ENCODE measurements at regions of chr1 and their contacts with region 1.

Region 1: GRCh38 chr1:64966158-64966971 is at the start of gene JAK1:
- DNase-seq: peak; percentile 79 to 94 (median 91)
- ATAC-seq: peak; percentile 91
- H3K4me3 ChIP-seq: peak within 1 kb of the TSS; percentile 93
- H3K4me3 Mint-ChIP-seq: peak within 1 kb of the TSS; percentile 90 to 97 (median 94)
- H3K27ac ChIP-seq: peak within 1 kb of the TSS; percentile 97
- H3K27ac Mint-ChIP-seq: peak within 1 kb of the TSS; percentile 91 to 99 (median 97)
- H3K4me1 ChIP-seq: peaks cover 31 to 41% of the 10 kb centered on the region in 2 donors
- H3K4me1 Mint-ChIP-seq: peaks cover 37 to 55% (median 49%) of the 10 kb centered on the region in 7 donors
- H3K27me3 ChIP-seq: no peaks in the 10 kb centered on the region
- H3K27me3 Mint-ChIP-seq: peaks cover 0 to 3% (median 0%) of the 10 kb centered on the region in 5 donors
- total RNA-seq, gene JAK1: 210 to 365 (median 265) TPM

Region 2: DNA sequence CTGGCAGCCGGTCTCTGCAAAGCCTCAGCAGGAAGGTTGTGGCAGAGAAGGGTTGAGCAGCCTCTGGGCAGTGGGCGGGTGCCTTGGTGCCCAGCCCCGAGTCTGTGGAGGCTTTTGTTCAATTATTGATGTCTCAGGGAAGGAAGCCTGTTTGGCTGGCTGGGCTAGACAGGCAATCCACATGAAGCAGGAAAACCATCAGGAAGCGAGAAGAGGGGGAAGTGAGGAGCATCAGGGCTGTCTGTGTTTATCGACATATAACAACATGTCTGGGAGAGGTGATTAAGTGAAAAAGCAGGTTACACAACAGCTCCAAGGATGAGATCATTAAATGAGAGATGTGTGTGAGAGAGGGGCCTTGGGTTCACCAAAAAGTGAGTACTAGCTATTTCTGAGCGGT is 657.5 kb before region 1 on chr1:
- CTCF ChIA-PET with region 1: no interaction called
- POLR2A ChIA-PET with region 1: no interaction called
- intact Hi-C with region 1: no loop called
- DNase-seq: no peak
- ATAC-seq: no peak
- H3K4me3 ChIP-seq: no peak overlapping the region
- H3K4me3 Mint-ChIP-seq: no peak overlapping the region
- H3K27ac ChIP-seq: no peak overlapping the region
- H3K27ac Mint-ChIP-seq: peak overlapping the region in 1 of 9 donors; percentile 82
- H3K4me1 ChIP-seq: no peaks in the 10 kb centered on the region
- H3K4me1 Mint-ChIP-seq: no peaks in the 10 kb centered on the region
- H3K27me3 ChIP-seq: no peaks in the 10 kb centered on the region
- H3K27me3 Mint-ChIP-seq: peaks cover 0 to 7% (median 3%) of the 10 kb centered on the region in 5 donors

Region 3: DNA sequence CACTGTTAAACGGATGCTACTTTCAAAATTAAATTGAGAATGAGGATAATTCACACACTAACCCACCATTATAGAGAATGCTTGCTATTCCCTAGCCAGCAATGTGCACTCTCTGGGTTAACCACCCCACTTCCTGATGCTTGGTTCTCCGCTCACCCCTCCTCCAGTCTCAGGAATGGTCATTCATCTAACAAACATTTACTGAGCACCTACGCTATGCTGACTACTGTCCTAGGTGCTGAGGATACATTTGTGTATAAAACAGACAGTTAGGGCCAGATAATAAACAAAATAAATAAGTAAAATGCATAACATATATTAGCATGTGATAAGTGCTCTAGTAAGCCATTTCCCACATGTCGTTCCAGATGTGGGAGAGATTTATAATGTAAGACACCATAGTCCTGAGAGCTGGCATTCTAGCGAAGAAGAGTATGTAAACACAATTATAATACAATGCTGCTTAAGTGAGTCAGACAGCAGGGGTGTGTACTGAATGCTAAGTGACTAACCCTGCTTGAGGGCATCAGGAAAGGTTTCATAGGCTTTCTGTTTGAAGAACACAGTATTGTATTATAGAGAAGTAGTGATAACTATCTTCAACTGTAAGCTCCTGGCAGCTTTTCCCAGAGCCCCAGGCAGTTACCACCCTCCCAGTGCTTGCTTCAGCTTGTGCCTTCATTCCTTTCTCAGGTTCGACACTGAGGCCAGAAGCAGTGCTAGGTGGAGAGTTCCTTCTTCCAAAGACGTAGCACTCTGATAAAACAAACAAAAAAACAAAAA is 623.1 kb before region 1 on chr1:
- CTCF ChIA-PET with region 1: no interaction called
- POLR2A ChIA-PET with region 1: no interaction called
- intact Hi-C with region 1: no loop called
- DNase-seq: no peak
- ATAC-seq: no peak
- H3K4me3 ChIP-seq: no peak overlapping the region
- H3K4me3 Mint-ChIP-seq: no peak overlapping the region
- H3K27ac ChIP-seq: no peak overlapping the region
- H3K27ac Mint-ChIP-seq: no peak overlapping the region
- H3K4me1 ChIP-seq: no peaks in the 10 kb centered on the region
- H3K4me1 Mint-ChIP-seq: no peaks in the 10 kb centered on the region
- H3K27me3 ChIP-seq: no peaks in the 10 kb centered on the region
- H3K27me3 Mint-ChIP-seq: peaks cover 0 to 8% (median 4%) of the 10 kb centered on the region in 5 donors

Region 4: DNA sequence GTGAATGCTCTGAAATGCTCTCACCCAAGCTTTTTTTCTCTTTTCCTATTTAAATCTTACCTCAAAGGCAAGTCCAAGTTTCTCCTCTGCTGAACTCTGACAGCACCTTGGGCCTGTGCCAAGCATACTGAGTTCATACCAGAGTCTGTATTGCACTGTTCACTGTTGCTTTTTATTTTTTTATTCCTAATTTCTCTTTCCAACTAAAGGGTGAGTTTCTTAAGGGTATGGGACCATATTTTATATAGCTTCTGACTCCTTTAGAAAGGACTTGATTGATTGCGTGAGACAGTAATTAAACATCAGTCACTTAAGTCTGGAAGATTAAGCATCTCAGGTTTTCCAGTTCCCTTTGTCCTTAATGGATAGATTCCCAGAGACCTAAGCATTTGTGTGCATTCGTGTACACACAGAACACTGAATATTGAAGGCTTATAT is 426.6 kb before region 1 on chr1:
- CTCF ChIA-PET with region 1: no interaction called
- POLR2A ChIA-PET with region 1: no interaction called
- intact Hi-C with region 1: loop called in 1 of 2 experiments (anchors 10 kb)
- DNase-seq: no peak
- ATAC-seq: no peak
- H3K4me3 ChIP-seq: no peak overlapping the region
- H3K4me3 Mint-ChIP-seq: peak overlapping the region in 8 of 10 donors; percentile 55 to 84 (median 70)
- H3K27ac ChIP-seq: peak overlapping the region; percentile 4
- H3K27ac Mint-ChIP-seq: peak overlapping the region in 8 of 9 donors; percentile 74 to 95 (median 92)
- H3K4me1 ChIP-seq: peaks cover 0 to 48% of the 10 kb centered on the region in 2 donors
- H3K4me1 Mint-ChIP-seq: peaks cover 30 to 98% (median 65%) of the 10 kb centered on the region in 7 donors
- H3K27me3 ChIP-seq: no peaks in the 10 kb centered on the region
- H3K27me3 Mint-ChIP-seq: peaks cover 0 to 5% (median 0%) of the 10 kb centered on the region in 5 donors

Region 5: DNA sequence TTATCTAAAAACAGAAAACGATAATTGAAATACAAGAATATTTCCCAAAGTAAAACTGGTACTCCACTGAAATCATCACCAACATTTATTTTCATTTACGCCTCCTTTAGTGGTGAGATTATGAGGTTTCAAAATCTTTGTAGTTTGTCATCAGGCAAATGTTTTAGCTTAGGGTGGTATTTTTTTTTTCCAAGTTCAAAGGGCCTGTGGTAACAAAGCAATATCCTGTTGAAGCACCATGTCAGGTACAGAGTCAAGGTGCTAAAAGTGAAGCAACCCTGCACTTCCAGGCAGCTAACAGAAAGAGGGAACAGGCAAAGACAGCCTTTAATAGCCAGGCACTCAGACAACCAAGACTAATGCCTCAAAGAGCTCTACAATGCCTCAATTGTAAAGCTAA is 89.2 kb before region 1 on chr1:
- CTCF ChIA-PET with region 1: interaction called, 5 read pairs
- POLR2A ChIA-PET with region 1: interaction called, 20 read pairs
- intact Hi-C with region 1: loop called (anchors 1 kb)
- DNase-seq: peak in 7 of 9 donors; percentile 75 to 90 (median 87)
- ATAC-seq: peak; percentile 96
- H3K4me3 ChIP-seq: peak overlapping the region; percentile 8
- H3K4me3 Mint-ChIP-seq: peak overlapping the region; percentile 70 to 83 (median 76)
- H3K27ac ChIP-seq: peak overlapping the region; percentile 36
- H3K27ac Mint-ChIP-seq: peak overlapping the region; percentile 41 to 95 (median 90)
- H3K4me1 ChIP-seq: peaks cover 43 to 53% of the 10 kb centered on the region in 2 donors
- H3K4me1 Mint-ChIP-seq: peaks cover 38 to 88% (median 84%) of the 10 kb centered on the region in 7 donors
- H3K27me3 ChIP-seq: no peaks in the 10 kb centered on the region
- H3K27me3 Mint-ChIP-seq: no peaks in the 10 kb centered on the region

Region 6: GRCh38 chr1:64928325-64928724 is 38.0 kb before region 1 on chr1:
- CTCF ChIA-PET with region 1: no interaction called
- POLR2A ChIA-PET with region 1: interaction called, 7 read pairs
- intact Hi-C with region 1: loop called (anchors 2 kb)
- DNase-seq: no peak
- ATAC-seq: no peak
- H3K4me3 ChIP-seq: no peak overlapping the region
- H3K4me3 Mint-ChIP-seq: peak overlapping the region in 9 of 10 donors; percentile 22 to 66 (median 57)
- H3K27ac ChIP-seq: no peak overlapping the region
- H3K27ac Mint-ChIP-seq: peak overlapping the region in 8 of 9 donors; percentile 17 to 73 (median 41)
- H3K4me1 ChIP-seq: peaks cover 53 to 57% of the 10 kb centered on the region in 2 donors
- H3K4me1 Mint-ChIP-seq: peaks cover 63 to 95% (median 89%) of the 10 kb centered on the region in 7 donors
- H3K27me3 ChIP-seq: no peaks in the 10 kb centered on the region
- H3K27me3 Mint-ChIP-seq: no peaks in the 10 kb centered on the region

Region 7: DNA sequence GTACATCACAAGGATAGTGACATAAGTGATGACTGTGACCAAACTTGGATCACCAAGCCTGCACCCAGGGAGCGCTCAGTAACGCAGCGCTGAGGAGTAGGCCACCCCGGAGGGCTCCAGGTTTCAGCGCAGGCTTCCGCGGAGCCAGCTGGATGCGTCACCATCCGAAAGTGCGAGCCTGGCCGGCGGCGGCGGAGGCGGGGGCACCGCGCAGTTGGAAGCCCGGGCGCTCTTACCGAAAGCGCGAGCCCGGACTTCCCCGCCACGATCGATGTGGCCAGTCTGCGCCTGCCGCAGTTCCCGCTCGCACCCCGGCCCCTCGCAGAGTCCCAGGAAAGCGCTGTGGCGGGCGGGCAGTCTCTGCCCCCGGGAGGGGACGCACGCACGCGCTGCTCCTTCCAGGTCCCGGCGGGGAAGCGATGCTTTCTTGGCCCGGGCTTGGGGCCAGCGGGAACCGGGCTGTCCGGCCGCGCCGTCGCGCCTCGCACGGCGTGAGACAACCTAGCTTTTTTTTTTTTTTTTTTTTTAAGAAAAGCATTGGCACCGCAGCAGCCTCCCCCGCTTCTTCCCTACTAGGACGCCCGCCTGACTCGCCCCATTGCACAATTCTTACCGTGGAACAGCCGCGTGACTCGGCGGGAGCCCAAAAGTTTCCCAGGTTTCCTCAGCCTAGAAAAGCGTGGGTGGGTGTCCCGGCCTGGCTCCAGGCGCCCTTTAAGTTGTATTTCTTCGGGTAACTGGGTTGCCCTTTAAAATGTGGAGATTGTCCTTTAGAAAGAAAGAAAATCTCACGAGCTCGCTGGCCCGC is 36.3 kb after region 1 on chr1:
- CTCF ChIA-PET with region 1: interaction called, 6 read pairs
- POLR2A ChIA-PET with region 1: interaction called, 30 read pairs
- intact Hi-C with region 1: loop called (anchors 1 kb)
- DNase-seq: peak; percentile 58 to 81 (median 67)
- ATAC-seq: peak; percentile 90
- H3K4me3 ChIP-seq: peak overlapping the region; percentile 56
- H3K4me3 Mint-ChIP-seq: peak overlapping the region; percentile 77 to 93 (median 86)
- H3K27ac ChIP-seq: peak overlapping the region; percentile 66
- H3K27ac Mint-ChIP-seq: peak overlapping the region; percentile 24 to 95 (median 82)
- H3K4me1 ChIP-seq: peaks cover 16 to 19% of the 10 kb centered on the region in 2 donors
- H3K4me1 Mint-ChIP-seq: peaks cover 8 to 44% (median 28%) of the 10 kb centered on the region in 7 donors
- H3K27me3 ChIP-seq: no peaks in the 10 kb centered on the region
- H3K27me3 Mint-ChIP-seq: peaks cover 0 to 33% (median 0%) of the 10 kb centered on the region in 5 donors

Region 8: DNA sequence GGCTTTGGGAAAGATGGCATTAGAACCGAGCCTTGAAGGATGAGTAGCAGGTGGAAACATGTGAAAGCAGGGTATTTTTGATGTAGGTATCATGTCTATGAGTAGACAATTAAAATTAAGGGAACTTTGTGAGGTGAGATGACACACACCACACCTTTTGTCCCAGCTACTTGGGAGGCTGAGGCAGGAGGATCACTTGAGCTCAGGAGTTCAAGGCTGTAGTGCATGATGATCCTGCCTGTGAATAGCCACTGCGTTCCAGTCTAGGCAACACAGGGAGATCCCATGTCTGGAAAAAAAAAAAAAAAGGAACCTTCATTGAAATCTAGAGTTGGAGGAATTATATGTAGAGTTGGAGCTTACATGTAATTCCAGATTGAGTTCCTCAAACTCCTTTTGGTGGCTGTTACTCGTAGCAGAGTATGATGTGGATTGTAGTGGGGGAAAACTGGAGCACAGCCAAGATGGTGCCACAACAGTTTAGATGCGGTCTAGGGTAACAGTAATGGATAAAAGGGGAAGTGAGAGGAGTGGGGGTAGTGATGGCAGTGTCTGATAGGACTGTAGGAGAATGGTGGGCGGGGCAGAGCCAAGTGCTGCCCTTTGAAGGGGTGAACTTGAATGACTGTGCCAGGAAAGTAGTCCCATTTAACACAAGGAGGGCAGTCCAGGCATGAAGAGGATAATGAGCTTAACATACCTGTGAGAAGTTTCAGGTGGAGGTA is 199.1 kb after region 1 on chr1:
- CTCF ChIA-PET with region 1: no interaction called
- POLR2A ChIA-PET with region 1: no interaction called
- intact Hi-C with region 1: no loop called
- DNase-seq: no peak
- ATAC-seq: peak; percentile 73
- H3K4me3 ChIP-seq: no peak overlapping the region
- H3K4me3 Mint-ChIP-seq: no peak overlapping the region
- H3K27ac ChIP-seq: no peak overlapping the region
- H3K27ac Mint-ChIP-seq: peak overlapping the region in 1 of 9 donors; percentile 12
- H3K4me1 ChIP-seq: no peaks in the 10 kb centered on the region
- H3K4me1 Mint-ChIP-seq: peaks cover 0 to 66% (median 0%) of the 10 kb centered on the region in 7 donors
- H3K27me3 ChIP-seq: no peaks in the 10 kb centered on the region
- H3K27me3 Mint-ChIP-seq: peaks cover 0 to 14% (median 10%) of the 10 kb centered on the region in 5 donors